ENCODE measurements at regions of chr17 and their contacts with region 1.

Region 1: GRCh38 chr17:31379597-31380205 is 11.8 kb upstream of the RAB11FIP4 start:
- DNase-seq: no peak
- H3K4me3 ChIP-seq: no peak overlapping the region
- H3K27ac ChIP-seq: no peak overlapping the region
- H3K4me1 ChIP-seq: no peaks in the 10 kb centered on the region
- H3K27me3 ChIP-seq: no peaks in the 10 kb centered on the region
- CTCF ChIP-seq: no peak

Region 2: GRCh38 chr17:31294820-31295488 is 84.7 kb before region 1 on chr17:
- CTCF ChIA-PET with region 1: no interaction called
- dilution Hi-C with region 1: loop called (anchors 5 kb)
- in situ Hi-C with region 1: no loop called
- intact Hi-C with region 1: no loop called
- DNase-seq: no peak
- H3K4me3 ChIP-seq: no peak overlapping the region
- H3K27ac ChIP-seq: no peak overlapping the region
- H3K4me1 ChIP-seq: no peaks in the 10 kb centered on the region
- H3K27me3 ChIP-seq: no peaks in the 10 kb centered on the region
- CTCF ChIP-seq: no peak

Region 3: DNA sequence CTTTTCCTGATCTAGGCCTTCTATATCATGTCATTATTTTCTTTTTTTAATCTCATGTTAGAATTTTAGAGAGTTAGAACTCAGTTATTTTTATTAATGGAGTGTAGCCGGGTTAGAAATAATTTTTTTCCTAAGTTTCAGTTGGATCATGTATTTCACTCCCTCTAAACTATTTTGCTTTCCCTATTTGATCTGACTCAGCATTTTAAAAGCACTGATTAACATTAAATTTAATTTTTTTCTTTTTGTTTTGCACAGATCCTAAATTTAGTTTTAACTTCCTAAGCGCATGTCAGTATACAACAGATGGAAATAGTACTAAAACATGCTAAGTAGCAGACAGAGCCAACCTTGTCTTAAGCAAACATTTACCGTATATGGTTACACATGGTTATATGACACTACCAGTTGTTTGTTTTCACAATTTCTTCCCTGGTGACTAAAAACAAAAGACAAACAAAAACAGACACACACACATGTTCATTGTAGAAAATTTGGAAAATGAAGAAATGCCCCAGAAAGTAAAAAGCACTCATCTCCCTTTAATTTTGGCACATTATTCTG is 21.8 kb before region 1 on chr17:
- CTCF ChIA-PET with region 1: no interaction called
- dilution Hi-C with region 1: no loop called
- in situ Hi-C with region 1: no loop called
- intact Hi-C with region 1: no loop called
- DNase-seq: no peak
- H3K4me3 ChIP-seq: no peak overlapping the region
- H3K27ac ChIP-seq: no peak overlapping the region
- H3K4me1 ChIP-seq: no peaks in the 10 kb centered on the region
- H3K27me3 ChIP-seq: no peaks in the 10 kb centered on the region
- CTCF ChIP-seq: no peak

Region 4: DNA sequence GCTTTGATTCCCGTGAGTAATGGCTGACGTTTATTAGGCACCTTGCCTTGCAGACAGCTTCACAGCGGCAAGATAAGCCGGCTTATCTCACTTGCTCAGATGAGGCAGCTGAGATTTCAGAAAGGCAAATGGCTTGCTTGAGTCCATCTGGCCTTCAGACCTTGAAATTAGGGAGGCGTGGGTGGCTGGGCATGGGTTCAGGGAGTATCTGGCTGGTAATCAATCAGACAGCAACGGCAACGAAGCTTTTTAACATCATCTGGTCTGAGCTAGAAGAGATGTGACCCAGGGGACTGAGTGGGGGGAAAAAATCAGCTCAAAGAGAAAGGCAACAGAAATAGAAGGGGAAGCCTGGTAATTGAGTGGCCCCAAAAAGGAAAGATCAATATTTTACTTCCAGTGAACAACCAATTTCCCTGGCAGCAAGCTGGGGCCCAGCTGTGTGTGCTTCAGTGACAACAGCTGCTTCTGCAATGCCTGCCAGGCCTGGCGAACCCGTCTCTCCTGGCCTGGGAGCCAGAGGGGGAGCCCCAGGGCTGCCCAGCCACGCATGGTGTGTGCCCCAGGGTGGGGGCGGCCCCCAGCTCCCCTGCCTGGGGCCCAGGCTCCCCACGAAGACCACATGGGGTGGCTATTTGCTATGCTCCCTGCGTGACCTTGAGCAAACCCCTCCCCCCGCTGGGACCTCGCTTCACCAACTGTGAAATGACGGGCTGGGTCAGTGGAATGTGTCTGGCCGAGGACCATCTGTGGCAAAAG is 45.8 kb after region 1 on chr17:
- CTCF ChIA-PET with region 1: no interaction called
- dilution Hi-C with region 1: loop called (anchors 5 kb)
- in situ Hi-C with region 1: no loop called
- intact Hi-C with region 1: no loop called
- DNase-seq: no peak
- H3K4me3 ChIP-seq: no peak overlapping the region
- H3K27ac ChIP-seq: no peak overlapping the region
- H3K4me1 ChIP-seq: no peaks in the 10 kb centered on the region
- H3K27me3 ChIP-seq: no peaks in the 10 kb centered on the region
- CTCF ChIP-seq: no peak

Region 5: GRCh38 chr17:31467502-31468256 is 88.0 kb after region 1 on chr17:
- CTCF ChIA-PET with region 1: no interaction called
- dilution Hi-C with region 1: loop called (anchors 5 kb)
- in situ Hi-C with region 1: no loop called
- intact Hi-C with region 1: no loop called
- DNase-seq: no peak
- H3K4me3 ChIP-seq: no peak overlapping the region
- H3K27ac ChIP-seq: no peak overlapping the region
- H3K4me1 ChIP-seq: no peaks in the 10 kb centered on the region
- H3K27me3 ChIP-seq: peaks cover 2% of the 10 kb centered on the region
- CTCF ChIP-seq: no peak

Measured in mammary epithelial cell (primary cell).